CD14-positive monocyte (primary cell): ENCODE measurements at regions of chr3 and their contacts with region 1.

Region 1: GRCh38 chr3:15778332-15778858 is 19.4 kb downstream of the ANKRD28 start:
- DNase-seq: no peak
- H3K4me3 ChIP-seq: no peak overlapping the region
- H3K4me3 Mint-ChIP-seq: no peak overlapping the region
- H3K27ac ChIP-seq: no peak overlapping the region
- H3K27ac Mint-ChIP-seq: peak overlapping the region in 1 of 7 donors; percentile 32
- H3K4me1 ChIP-seq: peaks cover 0 to 2% of the 10 kb centered on the region in 2 donors
- H3K4me1 Mint-ChIP-seq: peaks cover 2% of the 10 kb centered on the region
- H3K27me3 ChIP-seq: no peaks in the 10 kb centered on the region
- H3K27me3 Mint-ChIP-seq: no peaks in the 10 kb centered on the region
- CTCF ChIP-seq: no peak

Region 2: GRCh38 chr3:15726043-15726442 is 52.4 kb before region 1 on chr3:
- intact Hi-C with region 1: no loop called
- DNase-seq: no peak
- H3K4me3 ChIP-seq: no peak overlapping the region
- H3K4me3 Mint-ChIP-seq: no peak overlapping the region
- H3K27ac ChIP-seq: no peak overlapping the region
- H3K27ac Mint-ChIP-seq: no peak overlapping the region
- H3K4me1 ChIP-seq: no peaks in the 10 kb centered on the region
- H3K4me1 Mint-ChIP-seq: no peaks in the 10 kb centered on the region
- H3K27me3 ChIP-seq: no peaks in the 10 kb centered on the region
- H3K27me3 Mint-ChIP-seq: peaks cover 0 to 1% (median 0%) of the 10 kb centered on the region in 3 donors
- CTCF ChIP-seq: no peak

Region 3: DNA sequence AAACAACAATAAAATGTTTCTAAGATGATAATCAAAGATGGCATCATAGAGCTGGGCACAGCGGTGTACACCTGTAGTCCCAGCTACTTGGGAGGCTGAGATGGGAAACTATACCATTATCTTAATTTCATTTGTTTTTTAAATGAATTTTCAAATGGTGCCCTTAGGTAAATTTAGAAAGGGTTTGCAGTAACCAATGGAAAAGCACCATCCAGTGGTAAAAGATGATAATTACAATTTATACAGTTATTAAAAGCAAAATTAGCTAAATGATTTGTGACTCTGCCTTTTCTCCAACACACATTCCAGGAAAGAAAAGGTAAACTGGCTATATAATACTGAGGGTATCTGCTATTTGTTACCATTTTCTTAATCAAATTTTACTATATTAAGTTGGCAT is 33.8 kb after region 1 on chr3:
- intact Hi-C with region 1: loop called in 1 of 2 experiments (anchors 5 kb)
- DNase-seq: peak in 2 of 3 donors; percentile 37 to 63
- H3K4me3 ChIP-seq: no peak overlapping the region
- H3K4me3 Mint-ChIP-seq: peak overlapping the region in 1 of 2 donors; percentile 33
- H3K27ac ChIP-seq: no peak overlapping the region
- H3K27ac Mint-ChIP-seq: peak overlapping the region in 3 of 7 donors; percentile 18 to 80 (median 70)
- H3K4me1 ChIP-seq: peaks cover 4 to 6% of the 10 kb centered on the region in 2 donors
- H3K4me1 Mint-ChIP-seq: peaks cover 12% of the 10 kb centered on the region
- H3K27me3 ChIP-seq: no peaks in the 10 kb centered on the region
- H3K27me3 Mint-ChIP-seq: peaks cover 0 to 3% (median 0%) of the 10 kb centered on the region in 3 donors
- CTCF ChIP-seq: peak; percentile 75